Heart left ventricle (tissue), 16 donors: ENCODE measurements at regions of chr12 and their contacts with region 1.

Region 1: DNA sequence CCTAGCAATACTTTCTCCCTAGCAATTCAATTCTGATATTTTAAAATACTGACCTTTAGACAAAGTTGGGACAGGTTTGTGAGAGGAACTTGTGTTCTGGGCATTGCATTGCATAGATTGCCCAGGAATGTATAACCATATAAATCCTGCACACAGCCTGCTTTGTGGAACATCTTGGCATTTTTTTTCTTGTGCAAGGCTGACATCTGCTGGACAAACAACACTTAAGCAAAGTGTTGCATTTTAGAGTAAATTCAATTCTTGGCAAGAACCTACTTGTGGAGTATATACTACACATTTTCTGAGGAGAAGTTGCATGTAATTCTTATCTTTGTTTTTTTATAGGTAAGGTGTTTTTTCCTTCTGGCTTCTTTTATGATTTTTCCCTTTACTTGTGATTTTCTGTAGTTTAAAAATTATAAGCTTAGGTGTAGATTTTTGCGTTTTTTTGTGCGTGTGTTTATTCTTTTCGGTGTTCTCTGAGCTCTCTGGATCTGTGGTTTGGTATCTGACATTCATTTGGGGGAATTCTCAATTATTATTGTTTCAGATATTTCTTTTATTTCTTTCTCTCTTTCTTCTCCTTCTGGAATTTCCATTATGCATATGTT is 26.4 kb downstream of the TESPA1 start:
- DNase-seq: peak in 2 of 5 donors; percentile 28 to 39
- ATAC-seq: peak in 2 of 4 donors; percentile 32 to 54
- H3K4me3 ChIP-seq: no peak overlapping the region
- H3K27ac ChIP-seq: no peak overlapping the region
- H3K4me1 ChIP-seq: peaks cover 0 to 21% (median 0%) of the 10 kb centered on the region in 12 donors
- H3K27me3 ChIP-seq: peaks cover 0 to 9% (median 0%) of the 10 kb centered on the region in 9 donors
- CTCF ChIP-seq: peak; percentile 40 to 78 (median 66)
- POLR2A ChIP-seq: no peak

Region 2: DNA sequence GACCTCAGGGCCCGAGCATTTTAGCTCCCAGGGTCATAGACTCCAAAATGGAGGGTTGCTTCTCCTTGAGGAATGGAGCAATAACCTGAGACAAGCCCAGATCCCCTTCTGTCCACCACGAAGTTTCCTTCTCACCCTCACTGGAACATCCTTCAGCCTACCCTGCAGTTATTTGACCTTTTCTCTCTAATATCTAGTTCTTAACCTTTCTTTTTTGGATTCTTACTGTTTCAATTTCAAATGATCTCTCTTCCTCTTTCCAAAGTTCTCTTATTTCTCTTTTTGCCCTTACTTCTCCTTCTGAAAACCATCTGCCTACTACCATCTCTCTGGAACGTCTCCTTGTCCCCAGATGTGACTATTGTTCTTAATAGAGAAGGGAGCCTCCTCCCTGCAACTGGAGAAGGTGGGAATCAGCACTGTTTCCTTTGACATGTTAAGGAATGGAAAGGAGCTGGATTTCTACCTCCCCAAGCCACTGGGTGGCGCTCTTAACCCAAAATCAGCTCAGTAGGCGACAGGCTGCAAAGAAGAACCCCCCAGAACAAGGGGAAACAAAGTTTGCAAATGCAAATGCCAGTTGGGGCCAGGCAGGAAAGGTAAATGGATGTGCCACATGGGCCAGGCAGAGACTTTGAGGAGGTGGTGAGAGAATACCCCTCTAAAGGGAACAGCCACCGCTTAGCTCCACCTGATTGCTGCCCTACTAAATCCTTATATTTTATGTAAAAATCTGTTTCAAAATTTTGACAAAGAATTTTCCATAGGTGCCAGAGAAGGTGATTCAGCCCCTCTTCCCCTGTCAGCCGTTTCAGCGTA is 431.1 kb before region 1 on chr12:
- intact Hi-C with region 1: loop called in 1 of 10 experiments (anchors 5 kb)
- DNase-seq: peak in 4 of 5 donors; percentile 13 to 44 (median 32)
- ATAC-seq: no peak
- H3K4me3 ChIP-seq: no peak overlapping the region
- H3K27ac ChIP-seq: no peak overlapping the region
- H3K4me1 ChIP-seq: peaks cover 0 to 11% (median 0%) of the 10 kb centered on the region in 12 donors
- H3K27me3 ChIP-seq: peaks cover 0 to 12% (median 0%) of the 10 kb centered on the region in 9 donors
- CTCF ChIP-seq: peak; percentile 23 to 65 (median 48)
- POLR2A ChIP-seq: no peak

Region 3: DNA sequence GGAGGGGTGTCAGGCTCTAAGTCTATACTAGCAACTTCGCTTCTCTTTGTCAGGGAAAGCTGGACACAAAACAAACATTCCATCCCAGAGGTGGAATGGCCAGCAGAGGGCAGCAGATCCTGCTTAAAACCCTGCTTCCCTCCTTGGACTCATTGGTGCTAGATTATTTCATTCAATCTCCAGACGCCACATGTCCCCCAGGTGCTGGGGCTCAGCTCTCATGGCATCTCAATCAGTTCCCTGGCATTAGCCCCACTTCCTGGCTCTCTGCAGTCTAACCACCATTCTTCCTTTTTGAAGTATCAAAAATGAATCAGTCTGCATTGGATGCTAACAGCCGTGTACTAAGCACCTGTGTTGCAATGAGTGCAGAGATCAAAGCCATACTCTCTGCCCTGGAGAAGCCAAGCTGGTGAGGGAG is 361.6 kb before region 1 on chr12:
- intact Hi-C with region 1: loop called in 9 of 10 experiments (anchors 5 to 10 kb)
- DNase-seq: peak in 3 of 5 donors; percentile 32 to 65 (median 42)
- ATAC-seq: peak in 3 of 4 donors; percentile 47 to 69 (median 53)
- H3K4me3 ChIP-seq: no peak overlapping the region
- H3K27ac ChIP-seq: no peak overlapping the region
- H3K4me1 ChIP-seq: peaks cover 0 to 1% (median 0%) of the 10 kb centered on the region in 12 donors
- H3K27me3 ChIP-seq: peaks cover 0 to 3% (median 0%) of the 10 kb centered on the region in 9 donors
- CTCF ChIP-seq: peak; percentile 66 to 89 (median 78)
- POLR2A ChIP-seq: no peak

Region 4: DNA sequence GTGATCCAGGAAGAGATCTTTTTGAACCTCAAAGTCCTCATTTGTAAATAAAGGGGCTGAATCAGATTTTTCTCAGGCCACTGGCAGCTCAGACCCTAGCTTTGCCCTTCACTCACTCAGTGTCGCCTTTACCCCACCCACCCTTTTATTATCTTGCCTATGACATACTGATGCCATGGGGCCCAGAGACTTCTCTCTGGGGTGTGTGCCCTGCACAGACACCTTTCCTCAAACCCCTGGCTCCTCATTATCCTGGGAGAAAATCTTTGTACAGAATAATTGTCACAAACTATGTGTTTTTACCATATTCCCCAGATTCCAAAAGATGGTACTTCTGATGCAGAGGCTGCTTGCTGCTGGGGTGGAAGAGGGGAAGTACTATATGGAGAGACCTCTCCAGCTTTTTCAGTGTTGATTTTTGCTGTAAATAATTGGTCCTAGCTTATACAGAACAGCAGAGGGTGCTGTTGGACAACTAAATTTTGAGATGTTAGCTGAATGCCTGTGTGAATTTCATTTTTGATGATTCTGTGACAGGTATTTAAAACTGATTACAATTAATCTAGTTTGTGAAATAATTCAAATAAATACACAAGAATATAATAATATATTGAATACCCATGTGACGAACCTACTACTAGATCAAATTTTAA is 256.1 kb before region 1 on chr12:
- intact Hi-C with region 1: loop called in 9 of 10 experiments (anchors 2 to 5 kb)
- DNase-seq: no peak
- ATAC-seq: no peak
- H3K4me3 ChIP-seq: no peak overlapping the region
- H3K27ac ChIP-seq: no peak overlapping the region
- H3K4me1 ChIP-seq: no peaks in the 10 kb centered on the region
- H3K27me3 ChIP-seq: peaks cover 0 to 4% (median 0%) of the 10 kb centered on the region in 9 donors
- CTCF ChIP-seq: peak; percentile 36 to 71 (median 58)
- POLR2A ChIP-seq: no peak

Region 5: GRCh38 chr12:54749191-54749818 is 208.8 kb before region 1 on chr12:
- intact Hi-C with region 1: loop called (anchors 1 to 5 kb)
- DNase-seq: no peak
- ATAC-seq: no peak
- H3K4me3 ChIP-seq: no peak overlapping the region
- H3K27ac ChIP-seq: no peak overlapping the region
- H3K4me1 ChIP-seq: peaks cover 0 to 12% (median 0%) of the 10 kb centered on the region in 12 donors
- H3K27me3 ChIP-seq: peaks cover 0 to 35% (median 0%) of the 10 kb centered on the region in 9 donors
- CTCF ChIP-seq: peak; percentile 58 to 83 (median 72)
- POLR2A ChIP-seq: no peak

Region 6: DNA sequence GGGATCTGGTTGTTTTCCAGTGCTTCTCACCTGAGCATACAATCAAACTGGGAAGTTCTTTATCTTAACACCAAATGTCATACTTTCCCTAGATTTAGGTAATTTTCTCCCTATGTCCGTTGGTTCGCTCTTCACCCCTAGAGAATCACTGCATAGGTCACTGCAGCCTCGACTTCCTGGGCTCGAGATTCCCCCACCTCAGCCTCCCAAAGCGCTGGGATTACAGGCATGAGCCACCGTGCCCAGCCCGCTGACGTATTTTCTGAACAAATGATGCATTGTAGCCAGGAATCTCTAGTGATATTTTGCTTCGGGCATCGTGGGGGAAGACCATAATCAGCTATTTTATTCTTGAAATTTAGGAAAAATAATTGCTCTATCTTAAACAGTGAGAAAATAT is 1157.2 kb after region 1 on chr12:
- intact Hi-C with region 1: no loop called
- DNase-seq: no peak
- ATAC-seq: no peak
- H3K4me3 ChIP-seq: peak overlapping the region in 11 of 12 donors; percentile 66 to 95 (median 79)
- H3K27ac ChIP-seq: peak overlapping the region; percentile 72 to 98 (median 93)
- H3K4me1 ChIP-seq: peaks cover 0 to 30% (median 23%) of the 10 kb centered on the region in 12 donors
- H3K27me3 ChIP-seq: no peaks in the 10 kb centered on the region
- CTCF ChIP-seq: no peak
- POLR2A ChIP-seq: no peak